Astrocyte of the cerebellum (primary cell): ENCODE measurements at regions of chr3 and their contacts with region 1.

Region 1: GRCh38 chr3:196108083-196108743 is 26.3 kb upstream of the TFRC start:
- DNase-seq: no peak
- H3K4me3 ChIP-seq: no peak overlapping the region
- CTCF ChIP-seq: no peak

Region 2: GRCh38 chr3:195876297-195877031 is 231.7 kb before region 1 on chr3:
- in situ Hi-C with region 1: no loop called
- DNase-seq: no peak
- H3K4me3 ChIP-seq: no peak overlapping the region
- CTCF ChIP-seq: no peak

Region 3: GRCh38 chr3:196149831-196150521 is 41.8 kb after region 1 on chr3:
- in situ Hi-C with region 1: loop called (anchors 5 kb)
- DNase-seq: no peak
- H3K4me3 ChIP-seq: no peak overlapping the region
- CTCF ChIP-seq: no peak